CD8-positive, alpha-beta T cell (primary cell): ENCODE measurements at regions of chr1 and their contacts with region 1.

Region 1: GRCh38 chr1:182143154-182143657 is 81.7 kb upstream of the ZNF648 start:
- DNase-seq: peak; percentile 75 to 95 (median 85)
- ATAC-seq: peak; percentile 59
- H3K4me3 ChIP-seq: no peak overlapping the region
- H3K4me3 Mint-ChIP-seq: no peak overlapping the region
- H3K27ac ChIP-seq: no peak overlapping the region
- H3K27ac Mint-ChIP-seq: no peak overlapping the region
- H3K4me1 ChIP-seq: no peaks in the 10 kb centered on the region
- H3K4me1 Mint-ChIP-seq: peaks cover 4% of the 10 kb centered on the region
- H3K27me3 ChIP-seq: no peaks in the 10 kb centered on the region
- H3K27me3 Mint-ChIP-seq: peaks cover 7% of the 10 kb centered on the region
- CTCF ChIP-seq: peak; percentile 78

Region 2: DNA sequence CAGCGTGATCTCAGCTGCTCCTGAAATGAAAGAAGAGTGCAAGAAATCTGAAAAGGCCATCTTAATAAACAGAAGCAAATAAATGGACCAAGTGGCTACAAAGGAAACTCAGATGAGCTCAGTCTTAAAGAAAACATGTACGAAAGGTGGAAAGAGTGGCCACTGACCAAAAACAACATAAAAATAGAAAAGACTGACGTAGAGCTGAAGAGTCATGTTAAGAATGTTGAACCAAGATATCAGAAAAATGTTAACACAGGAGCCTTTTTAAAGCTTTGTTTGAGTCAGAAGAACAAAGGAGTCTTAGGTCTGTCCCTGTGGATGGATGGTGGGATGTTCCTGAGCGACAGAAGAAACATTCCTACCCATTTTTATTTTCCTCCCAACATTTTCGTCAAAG is 50.9 kb before region 1 on chr1:
- CTCF ChIA-PET with region 1: interaction called, 97 read pairs
- POLR2A ChIA-PET with region 1: no interaction called
- intact Hi-C with region 1: loop called in 1 of 2 experiments (anchors 5 kb)
- DNase-seq: no peak
- ATAC-seq: no peak
- H3K4me3 ChIP-seq: no peak overlapping the region
- H3K4me3 Mint-ChIP-seq: no peak overlapping the region
- H3K27ac ChIP-seq: no peak overlapping the region
- H3K27ac Mint-ChIP-seq: no peak overlapping the region
- H3K4me1 ChIP-seq: peaks cover 13% of the 10 kb centered on the region
- H3K4me1 Mint-ChIP-seq: peaks cover 17% of the 10 kb centered on the region
- H3K27me3 ChIP-seq: no peaks in the 10 kb centered on the region
- H3K27me3 Mint-ChIP-seq: peaks cover 5% of the 10 kb centered on the region
- CTCF ChIP-seq: no peak

Region 3: DNA sequence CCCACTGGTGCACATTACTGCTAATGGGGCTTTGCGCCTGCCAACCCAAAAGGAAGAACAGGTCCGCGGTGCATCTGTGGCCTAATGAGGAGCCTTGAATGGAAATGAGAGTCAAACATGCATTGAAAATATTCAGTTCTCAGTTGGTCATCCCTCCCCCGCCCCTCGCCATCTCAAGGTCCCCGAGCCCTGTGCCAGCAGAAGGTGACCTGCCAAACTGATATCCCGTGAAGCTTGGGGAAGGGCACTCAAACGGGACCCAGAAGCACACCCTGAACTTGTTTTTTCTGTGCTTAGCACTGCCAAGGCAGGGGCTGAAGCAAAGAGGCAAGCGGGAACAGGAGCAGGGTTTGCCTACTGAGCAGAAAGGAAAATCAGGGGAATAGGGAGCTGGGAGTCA is 13.8 kb before region 1 on chr1:
- CTCF ChIA-PET with region 1: interaction called, 30 read pairs
- POLR2A ChIA-PET with region 1: interaction called, 3 read pairs
- intact Hi-C with region 1: no loop called
- DNase-seq: no peak
- ATAC-seq: no peak
- H3K4me3 ChIP-seq: no peak overlapping the region
- H3K4me3 Mint-ChIP-seq: no peak overlapping the region
- H3K27ac ChIP-seq: no peak overlapping the region
- H3K27ac Mint-ChIP-seq: no peak overlapping the region
- H3K4me1 ChIP-seq: no peaks in the 10 kb centered on the region
- H3K4me1 Mint-ChIP-seq: no peaks in the 10 kb centered on the region
- H3K27me3 ChIP-seq: no peaks in the 10 kb centered on the region
- H3K27me3 Mint-ChIP-seq: no peaks in the 10 kb centered on the region
- CTCF ChIP-seq: no peak

Region 4: GRCh38 chr1:182166750-182167149 is 23.5 kb after region 1 on chr1:
- CTCF ChIA-PET with region 1: interaction called, 5 read pairs
- POLR2A ChIA-PET with region 1: no interaction called
- intact Hi-C with region 1: loop called in 1 of 2 experiments (anchors 2 kb)
- DNase-seq: no peak
- ATAC-seq: no peak
- H3K4me3 ChIP-seq: no peak overlapping the region
- H3K4me3 Mint-ChIP-seq: no peak overlapping the region
- H3K27ac ChIP-seq: no peak overlapping the region
- H3K27ac Mint-ChIP-seq: no peak overlapping the region
- H3K4me1 ChIP-seq: no peaks in the 10 kb centered on the region
- H3K4me1 Mint-ChIP-seq: peaks cover 7% of the 10 kb centered on the region
- H3K27me3 ChIP-seq: no peaks in the 10 kb centered on the region
- H3K27me3 Mint-ChIP-seq: no peaks in the 10 kb centered on the region
- CTCF ChIP-seq: no peak

Region 5: GRCh38 chr1:182291584-182292192 is 148.5 kb after region 1 on chr1:
- CTCF ChIA-PET with region 1: no interaction called
- POLR2A ChIA-PET with region 1: no interaction called
- intact Hi-C with region 1: no loop called
- DNase-seq: no peak
- ATAC-seq: no peak
- H3K4me3 ChIP-seq: no peak overlapping the region
- H3K4me3 Mint-ChIP-seq: no peak overlapping the region
- H3K27ac ChIP-seq: no peak overlapping the region
- H3K27ac Mint-ChIP-seq: no peak overlapping the region
- H3K4me1 ChIP-seq: no peaks in the 10 kb centered on the region
- H3K4me1 Mint-ChIP-seq: peaks cover 6% of the 10 kb centered on the region
- H3K27me3 ChIP-seq: no peaks in the 10 kb centered on the region
- H3K27me3 Mint-ChIP-seq: no peaks in the 10 kb centered on the region
- CTCF ChIP-seq: no peak

Region 6: DNA sequence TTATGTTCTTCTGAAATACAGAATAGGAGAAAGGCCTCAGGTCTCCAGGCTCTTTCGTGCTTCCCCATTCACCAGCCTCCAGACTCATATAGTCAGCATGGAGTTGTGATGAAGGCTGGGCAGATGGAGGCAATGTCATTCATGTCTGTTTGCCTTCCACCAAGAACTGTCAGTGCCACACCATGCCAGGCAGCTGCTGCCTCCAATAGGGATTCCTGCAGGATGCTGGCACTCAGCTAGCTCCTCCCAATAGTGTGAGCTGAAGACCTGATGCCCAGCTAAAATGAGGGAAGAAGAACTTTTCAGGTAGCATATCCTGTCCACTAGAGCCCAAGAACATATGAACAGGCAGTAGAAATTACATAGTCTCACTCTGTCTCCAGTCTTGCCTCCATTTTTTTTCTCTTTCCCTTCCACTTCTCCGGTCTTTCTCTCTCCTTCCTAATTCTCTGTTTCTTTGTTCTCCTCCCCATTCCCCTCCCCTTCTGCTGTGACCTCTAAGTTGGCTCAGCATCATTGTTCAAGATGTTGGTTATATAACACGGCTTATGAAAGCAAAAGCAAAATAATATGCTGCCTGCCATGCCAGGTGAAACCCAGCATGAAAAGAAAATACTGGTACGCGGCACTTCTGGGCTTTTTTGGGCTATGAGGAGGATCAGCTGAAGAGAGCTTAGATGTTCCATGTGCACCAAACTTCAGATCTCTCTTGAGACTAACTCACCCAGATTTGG is 231.1 kb after region 1 on chr1:
- CTCF ChIA-PET with region 1: interaction called, 15 read pairs
- POLR2A ChIA-PET with region 1: no interaction called
- intact Hi-C with region 1: no loop called
- DNase-seq: no peak
- ATAC-seq: no peak
- H3K4me3 ChIP-seq: no peak overlapping the region
- H3K4me3 Mint-ChIP-seq: no peak overlapping the region
- H3K27ac ChIP-seq: no peak overlapping the region
- H3K27ac Mint-ChIP-seq: no peak overlapping the region
- H3K4me1 ChIP-seq: no peaks in the 10 kb centered on the region
- H3K4me1 Mint-ChIP-seq: no peaks in the 10 kb centered on the region
- H3K27me3 ChIP-seq: no peaks in the 10 kb centered on the region
- H3K27me3 Mint-ChIP-seq: no peaks in the 10 kb centered on the region
- CTCF ChIP-seq: no peak

Region 7: GRCh38 chr1:182397771-182398393 is 254.7 kb after region 1 on chr1:
- CTCF ChIA-PET with region 1: interaction called, 420 read pairs
- POLR2A ChIA-PET with region 1: interaction called, 22 read pairs
- intact Hi-C with region 1: loop called (anchors 1 kb)
- DNase-seq: no peak
- ATAC-seq: no peak
- H3K4me3 ChIP-seq: no peak overlapping the region
- H3K4me3 Mint-ChIP-seq: no peak overlapping the region
- H3K27ac ChIP-seq: no peak overlapping the region
- H3K27ac Mint-ChIP-seq: no peak overlapping the region
- H3K4me1 ChIP-seq: no peaks in the 10 kb centered on the region
- H3K4me1 Mint-ChIP-seq: peaks cover 3% of the 10 kb centered on the region
- H3K27me3 ChIP-seq: peaks cover 0 to 2% of the 10 kb centered on the region in 2 experiments
- H3K27me3 Mint-ChIP-seq: peaks cover 20% of the 10 kb centered on the region
- CTCF ChIP-seq: no peak